ENCODE measurements at regions of chr2 and their contacts with region 1.

Region 1: DNA sequence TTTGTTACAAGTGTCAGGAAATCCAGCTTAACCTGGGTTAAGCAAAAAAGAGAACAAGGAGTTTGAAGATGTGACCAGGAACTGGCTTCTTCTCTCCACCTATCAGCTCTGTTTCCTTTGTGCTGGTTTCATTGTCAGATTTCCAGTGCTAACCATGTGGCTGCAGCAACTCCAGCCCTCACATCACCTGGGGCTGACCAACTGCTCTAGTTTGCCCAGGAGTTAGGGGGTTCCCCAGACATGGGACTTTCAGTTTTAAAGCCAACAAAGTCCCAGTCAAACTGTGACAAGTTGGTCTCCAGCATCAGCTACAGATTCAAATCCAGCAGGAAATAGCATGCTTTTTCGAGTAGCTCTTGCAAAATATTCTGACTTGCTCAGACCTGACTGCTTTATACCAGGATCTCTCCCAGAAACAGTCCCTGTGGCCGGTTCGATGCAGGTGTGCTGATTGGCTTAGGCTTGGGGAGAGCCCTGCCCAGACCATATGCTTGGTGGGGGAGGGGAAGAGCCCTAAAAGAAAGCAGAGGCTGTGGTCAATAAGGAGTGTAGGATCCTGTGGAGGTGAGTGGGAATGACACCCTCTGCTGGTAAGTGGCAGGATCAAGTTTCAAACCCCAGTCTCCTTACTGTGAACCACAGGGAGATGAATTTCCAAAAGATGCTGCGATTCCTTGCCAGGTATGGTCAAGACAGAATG is 49.5 kb downstream of the KCNE4 start:
- DNase-seq: peak; percentile 83

Region 2: DNA sequence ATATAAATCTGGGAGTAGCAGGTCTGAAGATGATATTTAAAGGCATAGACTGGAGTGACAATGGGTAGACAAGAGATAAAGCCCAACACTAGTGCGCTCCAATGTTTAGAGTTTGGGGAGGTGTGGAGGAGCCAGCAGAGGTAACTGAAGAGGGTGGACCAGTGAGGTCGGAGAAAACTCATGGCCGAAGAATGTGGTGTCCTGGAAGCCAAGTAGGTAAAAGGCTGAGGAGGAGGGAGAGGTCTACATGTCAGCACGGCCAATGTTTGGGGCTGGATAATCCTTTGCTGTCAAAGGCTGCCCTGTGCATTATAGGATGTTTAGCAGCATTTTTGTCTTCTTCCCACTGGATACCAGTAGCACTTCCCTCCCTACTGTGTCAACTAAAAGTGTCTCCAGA is 128.3 kb before region 1 on chr2:
- in situ Hi-C with region 1: loop called (anchors 5 kb)
- DNase-seq: no peak

Measured in SK-MEL-5 (cell line).